ENCODE measurements at regions of chr20 and their contacts with region 1.

Region 1: DNA sequence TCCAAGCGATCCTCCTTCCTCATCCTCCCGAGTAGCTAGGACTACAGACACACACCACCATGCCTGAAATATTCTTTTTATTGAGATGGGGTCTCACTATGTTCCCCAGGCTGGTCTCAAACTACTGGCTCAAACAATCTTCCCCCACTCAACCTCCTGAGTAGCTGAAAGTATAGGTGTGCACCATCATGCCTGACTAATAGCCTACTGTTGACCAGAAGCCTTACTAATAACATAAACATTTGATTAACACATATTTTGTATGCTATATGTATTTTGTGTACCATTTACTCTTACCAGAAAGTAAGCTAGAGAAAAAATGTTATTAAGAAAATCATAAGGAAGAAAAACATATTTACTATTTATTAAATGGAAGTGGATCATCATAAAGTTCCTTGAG is 11.9 kb upstream of the WFDC10A start:
- DNase-seq: no peak
- H3K27ac ChIP-seq: no peak overlapping the region
- CTCF ChIP-seq: no peak

Region 2: GRCh38 chr20:45629496-45630100 is 12.0 kb after region 1 on chr20 and contains the start of gene WFDC10A:
- CTCF ChIA-PET with region 1: interaction called, 14 read pairs
- POLR2A ChIA-PET with region 1: no interaction called
- DNase-seq: peak; percentile 83
- H3K27ac ChIP-seq: no peak within 1 kb of the TSS
- CTCF ChIP-seq: peak; percentile 92

Region 3: GRCh38 chr20:45704969-45705637 is 87.5 kb after region 1 on chr20 and contains the start of gene WFDC10B:
- CTCF ChIA-PET with region 1: no interaction called
- POLR2A ChIA-PET with region 1: no interaction called
- DNase-seq: no peak
- H3K27ac ChIP-seq: peak within 1 kb of the TSS; percentile 40
- CTCF ChIP-seq: no peak

Region 4: GRCh38 chr20:45752746-45753145 is 135.2 kb after region 1 on chr20:
- CTCF ChIA-PET with region 1: no interaction called
- POLR2A ChIA-PET with region 1: no interaction called
- DNase-seq: no peak
- H3K27ac ChIP-seq: no peak overlapping the region
- CTCF ChIP-seq: no peak

Measured in RWPE1 (cell line).